HCT116 (cell line): ENCODE measurements at regions of chr22 and their contacts with region 1.

Region 1: GRCh38 chr22:20238536-20238900 is 29.6 kb downstream of the RTN4R start:
- DNase-seq: peak; percentile 13
- ATAC-seq: peak; percentile 96
- H3K4me3 ChIP-seq: no peak overlapping the region
- H3K27ac ChIP-seq: no peak overlapping the region
- H3K4me1 ChIP-seq: peaks cover 4% of the 10 kb centered on the region in 2 experiments; a peak in 3 of 4 replicates
- H3K27me3 ChIP-seq: no peaks in the 10 kb centered on the region
- CTCF ChIP-seq: peak; percentile 66 to 81 (median 77); a peak in 5 of 6 replicates
- POLR2A ChIP-seq: no peak
- RAD21 ChIP-seq: peak; percentile 86

Region 2: DNA sequence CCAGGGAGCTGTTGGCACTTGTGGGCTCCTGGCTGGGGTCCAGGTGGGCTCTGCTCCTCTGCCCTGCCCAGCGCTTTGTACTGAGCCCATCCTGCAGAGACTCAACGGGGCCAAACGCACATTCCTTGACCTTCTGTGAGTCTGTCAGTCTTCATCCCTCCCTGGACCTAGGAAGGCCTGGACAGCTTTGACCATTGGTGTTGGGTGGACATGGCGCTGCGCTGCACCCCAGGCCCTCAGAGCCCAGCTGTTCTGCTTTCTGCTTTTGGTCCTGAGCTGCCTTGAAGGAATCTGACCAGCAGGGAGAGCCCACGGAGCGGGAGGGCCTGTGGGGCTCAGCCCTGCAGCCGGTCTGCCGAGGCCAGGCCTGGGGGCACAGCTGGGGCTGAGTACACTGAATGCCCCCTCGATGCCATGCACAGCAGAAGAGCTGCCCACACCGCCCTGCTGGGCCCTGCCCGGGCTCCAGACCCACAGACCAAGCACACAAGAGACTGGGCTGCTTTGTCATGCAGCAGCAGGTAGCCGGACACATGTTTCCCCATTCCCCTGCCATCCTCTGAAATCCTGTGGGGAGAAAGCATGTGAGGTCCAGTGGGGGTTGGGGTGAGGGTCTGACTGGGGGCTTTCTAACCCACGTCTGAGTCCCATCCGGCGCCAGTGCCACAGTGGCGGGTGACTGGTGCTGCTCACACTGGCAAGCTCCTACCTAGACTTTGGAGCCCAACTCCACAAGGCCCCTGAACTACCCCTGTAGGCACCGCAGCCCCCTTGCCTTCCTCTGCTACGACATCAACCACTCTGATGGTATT is 63.5 kb before region 1 on chr22:
- CTCF ChIA-PET with region 1: interaction called, 11 read pairs
- POLR2A ChIA-PET with region 1: no interaction called
- RAD21 ChIA-PET with region 1: interaction called in 1 of 2 experiments, 4 read pairs
- intact Hi-C with region 1: no loop called
- DNase-seq: no peak
- ATAC-seq: peak; percentile 76
- H3K4me3 ChIP-seq: no peak overlapping the region
- H3K27ac ChIP-seq: no peak overlapping the region
- H3K4me1 ChIP-seq: no peaks in the 10 kb centered on the region; a peak in 1 of 4 replicates
- H3K27me3 ChIP-seq: no peaks in the 10 kb centered on the region
- CTCF ChIP-seq: peak; percentile 34 to 38 (median 37); a peak in 4 of 6 replicates
- POLR2A ChIP-seq: no peak
- RAD21 ChIP-seq: peak; percentile 59

Region 3: DNA sequence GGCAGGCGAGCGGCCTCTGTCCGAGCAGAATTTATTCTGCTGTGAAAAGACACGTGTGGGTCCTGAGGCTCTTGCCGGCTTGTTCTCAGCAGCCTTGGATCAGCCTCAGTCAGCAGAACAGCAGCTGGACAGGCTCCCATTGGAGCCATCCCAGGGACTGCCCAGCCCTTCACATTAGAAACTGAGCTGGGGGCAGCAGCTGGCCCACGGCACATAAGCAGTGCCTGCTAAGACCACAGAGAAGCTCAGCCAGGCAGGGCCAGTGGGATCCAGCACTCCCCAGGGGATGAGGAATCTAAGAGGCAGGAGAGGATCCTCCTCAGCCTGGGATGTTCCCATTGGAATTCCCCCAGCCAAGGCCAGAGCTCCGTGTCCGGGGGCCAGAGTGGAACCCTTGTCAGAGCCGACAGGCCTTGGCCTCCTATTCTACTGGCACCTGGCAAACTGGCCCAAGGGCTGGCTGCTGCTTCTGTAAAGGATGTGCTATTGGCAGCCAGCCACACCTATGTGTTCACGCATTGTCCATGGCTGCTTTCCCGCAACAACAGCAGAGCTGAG is 11.4 kb after region 1 on chr22:
- CTCF ChIA-PET with region 1: no interaction called
- POLR2A ChIA-PET with region 1: no interaction called
- RAD21 ChIA-PET with region 1: no interaction called
- intact Hi-C with region 1: no loop called
- DNase-seq: no peak
- ATAC-seq: no peak
- H3K4me3 ChIP-seq: no peak overlapping the region
- H3K27ac ChIP-seq: no peak overlapping the region
- H3K4me1 ChIP-seq: no peaks in the 10 kb centered on the region; a peak in 1 of 4 replicates
- H3K27me3 ChIP-seq: no peaks in the 10 kb centered on the region
- CTCF ChIP-seq: no peak
- POLR2A ChIP-seq: no peak
- RAD21 ChIP-seq: no peak